ENCODE measurements at regions of chr7 and their contacts with region 1.

Region 1: DNA sequence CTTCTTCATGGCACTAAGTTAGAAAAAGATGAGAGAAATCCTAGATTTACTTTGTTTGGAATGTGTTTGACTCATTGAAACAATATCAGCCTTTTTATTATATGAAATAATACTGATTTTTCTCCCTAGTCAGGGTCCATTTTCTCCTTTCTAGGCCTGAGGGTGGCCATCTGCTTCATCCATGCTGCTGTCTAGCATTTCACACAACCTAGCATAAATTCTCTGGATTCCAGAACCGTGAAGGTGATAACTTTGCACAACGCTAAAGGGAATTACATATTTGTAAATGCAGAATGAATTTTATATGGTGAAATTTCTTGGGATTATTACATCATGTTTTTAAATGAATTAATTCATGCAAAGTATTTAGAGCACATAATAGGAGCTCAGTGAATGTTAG is 505.1 kb downstream of the INHBA start:
- DNase-seq: no peak
- ATAC-seq: no peak
- H3K4me3 ChIP-seq: no peak overlapping the region
- H3K27ac ChIP-seq: no peak overlapping the region
- H3K4me1 ChIP-seq: no peaks in the 10 kb centered on the region
- H3K27me3 ChIP-seq: no peaks in the 10 kb centered on the region
- CTCF ChIP-seq: no peak
- POLR2A ChIP-seq: no peak

Region 2: DNA sequence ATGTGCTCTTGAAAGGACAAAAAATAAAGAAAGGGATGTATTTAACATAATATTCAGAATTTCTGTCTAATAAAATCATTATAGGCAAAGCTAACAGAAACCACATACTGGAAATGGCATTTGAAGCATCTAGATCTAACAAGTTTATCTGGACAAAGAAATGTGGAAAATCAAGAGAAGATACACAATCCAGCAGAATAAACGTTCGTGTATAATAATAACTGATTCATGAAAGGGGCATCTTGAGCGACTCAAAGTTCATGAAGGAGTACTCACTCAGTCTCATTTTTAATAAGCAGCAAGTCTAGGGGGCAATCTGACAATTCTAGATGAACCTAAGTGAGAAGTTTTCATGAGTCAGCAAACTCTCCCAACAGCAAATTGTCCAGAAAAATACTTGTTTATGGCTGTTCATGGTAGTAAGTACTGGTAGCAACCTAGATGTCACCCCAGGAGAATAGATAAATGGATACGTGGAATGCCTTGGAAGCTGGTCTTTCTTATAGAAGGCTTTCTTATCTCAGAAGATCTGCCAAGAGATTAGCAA is 36.6 kb before region 1 on chr7:
- in situ Hi-C with region 1: no loop called
- intact Hi-C with region 1: loop called (anchors 2 kb)
- DNase-seq: no peak
- ATAC-seq: no peak
- H3K4me3 ChIP-seq: no peak overlapping the region
- H3K27ac ChIP-seq: no peak overlapping the region
- H3K4me1 ChIP-seq: no peaks in the 10 kb centered on the region
- H3K27me3 ChIP-seq: no peaks in the 10 kb centered on the region
- CTCF ChIP-seq: no peak
- POLR2A ChIP-seq: no peak

Region 3: GRCh38 chr7:41232086-41232485 is 34.3 kb after region 1 on chr7:
- in situ Hi-C with region 1: no loop called
- intact Hi-C with region 1: no loop called
- DNase-seq: no peak
- ATAC-seq: no peak
- H3K4me3 ChIP-seq: no peak overlapping the region
- H3K27ac ChIP-seq: no peak overlapping the region
- H3K4me1 ChIP-seq: no peaks in the 10 kb centered on the region
- H3K27me3 ChIP-seq: no peaks in the 10 kb centered on the region
- CTCF ChIP-seq: no peak
- POLR2A ChIP-seq: no peak

Measured in gastrocnemius medialis (tissue), 4 donors.